ENCODE measurements at regions of chr10 and their contacts with region 1.

Region 1: GRCh38 chr10:119030421-119031250 is 1.1 kb downstream of the NANOS1 start:
- DNase-seq: no peak

Region 2: DNA sequence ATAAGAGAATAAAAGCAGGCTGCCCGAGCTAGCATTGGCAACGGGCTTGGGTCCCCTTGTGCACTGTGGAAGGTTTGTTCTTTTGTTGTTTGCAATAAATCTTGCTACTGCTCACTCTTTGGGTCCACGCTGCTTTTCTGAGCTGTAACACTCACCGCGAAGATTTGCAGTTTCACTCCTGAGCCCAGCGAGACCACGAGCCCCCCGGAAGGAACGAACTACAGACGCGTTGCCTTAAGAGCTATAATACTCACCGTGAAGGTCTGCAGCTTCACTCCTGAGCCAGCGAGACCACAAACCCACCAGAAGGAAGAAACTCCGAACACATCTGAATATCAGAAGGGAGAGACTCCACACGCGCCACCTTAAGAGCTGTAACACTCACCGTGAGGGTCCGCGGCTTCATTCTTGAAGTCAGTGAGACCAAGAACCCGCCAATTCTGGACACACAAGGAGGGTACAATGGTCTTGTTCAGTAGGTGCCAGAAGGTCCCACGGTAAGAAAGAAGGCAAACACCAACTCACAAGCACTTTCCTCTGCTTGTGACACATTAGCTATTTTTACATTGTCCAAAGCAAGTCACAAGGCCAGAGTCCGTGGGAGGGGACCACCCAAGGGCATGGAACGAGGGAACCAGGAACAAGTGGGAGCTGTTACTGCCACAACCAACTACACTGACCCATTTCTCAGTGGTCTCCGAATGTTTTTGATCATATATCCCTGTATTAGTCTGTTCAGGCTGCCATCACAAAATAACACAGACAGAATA is 246.7 kb before region 1 on chr10:
- intact Hi-C with region 1: no loop called
- DNase-seq: no peak

Region 3: GRCh38 chr10:119070395-119071165 is 39.9 kb after region 1 on chr10:
- intact Hi-C with region 1: loop called in 1 of 2 experiments (anchors 5 kb)
- DNase-seq: no peak